ENCODE measurements at regions of chr11 and their contacts with region 1.

Region 1: GRCh38 chr11:113773416-113774173 is at the start of gene ZW10:
- DNase-seq: peak; percentile 97 to 99
- H3K4me3 ChIP-seq: peak within 1 kb of the TSS; percentile 72
- H3K4me3 Mint-ChIP-seq: peak within 1 kb of the TSS; percentile 99
- H3K27ac Mint-ChIP-seq: peak within 1 kb of the TSS; percentile 97
- H3K4me1 ChIP-seq: peaks cover 5% of the 10 kb centered on the region; the same call in 1 of the 2 replicates
- H3K4me1 Mint-ChIP-seq: peaks cover 7% of the 10 kb centered on the region
- H3K27me3 ChIP-seq: no peaks in the 10 kb centered on the region
- H3K27me3 Mint-ChIP-seq: peaks cover 3% of the 10 kb centered on the region
- CTCF ChIP-seq: peak; percentile 97
- total RNA-seq, gene ZW10: 43.1 and 44.0 TPM in 2 replicates

Region 2: GRCh38 chr11:113615773-113616172 is 157.8 kb before region 1 on chr11:
- CTCF ChIA-PET with region 1: no interaction called
- POLR2A ChIA-PET with region 1: interaction called, 14 read pairs
- intact Hi-C with region 1: no loop called
- DNase-seq: no peak
- H3K4me3 ChIP-seq: no peak overlapping the region
- H3K4me3 Mint-ChIP-seq: no peak overlapping the region
- H3K27ac Mint-ChIP-seq: no peak overlapping the region
- H3K4me1 ChIP-seq: peaks cover 9% of the 10 kb centered on the region
- H3K4me1 Mint-ChIP-seq: peaks cover 21% of the 10 kb centered on the region
- H3K27me3 ChIP-seq: no peaks in the 10 kb centered on the region
- H3K27me3 Mint-ChIP-seq: no peaks in the 10 kb centered on the region
- CTCF ChIP-seq: no peak

Region 3: DNA sequence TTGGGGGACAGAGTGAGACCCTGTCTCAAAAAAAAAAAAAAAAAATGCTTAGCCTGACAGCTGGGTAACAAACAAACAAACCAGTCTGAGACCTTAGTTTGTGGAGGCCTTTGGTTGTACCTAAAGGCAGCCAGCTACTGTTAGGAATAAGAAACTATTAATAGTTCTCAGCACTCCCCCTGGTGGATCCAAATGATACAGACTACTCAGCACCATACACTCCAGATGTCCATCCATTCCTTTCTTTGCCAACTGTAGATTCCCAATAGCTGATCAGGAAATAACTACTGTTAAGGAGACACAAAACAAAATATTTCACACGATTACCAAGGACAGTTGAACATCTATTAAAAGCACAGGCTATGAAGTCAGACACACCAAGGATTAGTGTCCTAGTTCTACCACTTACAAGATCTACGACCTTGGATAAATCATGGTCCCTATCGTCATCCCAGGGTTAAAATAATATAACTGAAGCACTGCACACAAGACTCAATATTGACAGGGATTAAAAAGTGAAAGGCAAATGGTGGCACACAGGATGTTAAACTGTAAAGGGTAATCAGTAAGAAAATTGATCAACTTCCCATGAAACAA is 23.2 kb after region 1 on chr11:
- CTCF ChIA-PET with region 1: interaction called, 6 read pairs
- POLR2A ChIA-PET with region 1: no interaction called
- intact Hi-C with region 1: loop called (anchors 1 kb)
- DNase-seq: peak; percentile 48 to 70
- H3K4me3 ChIP-seq: no peak overlapping the region
- H3K4me3 Mint-ChIP-seq: no peak overlapping the region
- H3K27ac Mint-ChIP-seq: no peak overlapping the region
- H3K4me1 ChIP-seq: no peaks in the 10 kb centered on the region
- H3K4me1 Mint-ChIP-seq: no peaks in the 10 kb centered on the region
- H3K27me3 ChIP-seq: no peaks in the 10 kb centered on the region
- H3K27me3 Mint-ChIP-seq: no peaks in the 10 kb centered on the region
- CTCF ChIP-seq: peak; percentile 79 to 86

Region 4: DNA sequence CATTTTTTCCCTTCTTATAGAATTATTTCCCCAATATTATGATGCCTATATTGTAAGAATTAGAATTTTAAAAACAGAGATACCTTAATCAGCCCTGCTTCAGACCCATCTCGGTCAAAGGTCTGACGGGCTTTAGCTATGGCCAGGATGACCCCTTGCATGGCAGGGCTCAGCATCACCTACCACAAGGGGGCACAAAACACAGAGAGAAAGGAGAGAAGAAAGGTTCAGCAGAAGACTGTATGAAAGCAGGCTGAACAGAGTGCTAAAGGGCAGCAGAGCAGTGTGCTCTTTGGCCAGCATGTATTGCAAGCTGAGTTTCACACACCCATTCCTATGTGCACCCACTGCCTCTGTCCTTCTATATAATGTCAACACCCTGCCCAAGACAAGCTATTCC is 32.8 kb after region 1 on chr11:
- CTCF ChIA-PET with region 1: interaction called, 11 read pairs
- POLR2A ChIA-PET with region 1: no interaction called
- intact Hi-C with region 1: no loop called
- DNase-seq: peak; percentile 77 to 82
- H3K4me3 ChIP-seq: no peak overlapping the region
- H3K4me3 Mint-ChIP-seq: no peak overlapping the region
- H3K27ac Mint-ChIP-seq: no peak overlapping the region
- H3K4me1 ChIP-seq: no peaks in the 10 kb centered on the region
- H3K4me1 Mint-ChIP-seq: no peaks in the 10 kb centered on the region
- H3K27me3 ChIP-seq: no peaks in the 10 kb centered on the region
- H3K27me3 Mint-ChIP-seq: no peaks in the 10 kb centered on the region
- CTCF ChIP-seq: peak; percentile 87 to 90

Measured in Caco-2 (cell line).